ENCODE measurements at regions of chr5 and their contacts with region 1.

Region 1: GRCh38 chr5:57499262-57500050 is 16.8 kb upstream of the ACTBL2 start:
- DNase-seq: no peak
- ATAC-seq: peak; percentile 68 to 71
- H3K4me3 ChIP-seq: peak overlapping the region in 2 of 4 donors; percentile 25 to 49
- H3K27ac ChIP-seq: no peak overlapping the region
- H3K4me1 ChIP-seq: peaks cover 0 to 11% of the 10 kb centered on the region in 2 donors
- H3K27me3 ChIP-seq: no peaks in the 10 kb centered on the region
- CTCF ChIP-seq: peak; percentile 36 to 76 (median 55)
- POLR2A ChIP-seq: no peak

Region 2: GRCh38 chr5:57754616-57755015 is 255.2 kb after region 1 on chr5:
- in situ Hi-C with region 1: loop called in 1 of 4 experiments (anchors 25 kb)
- intact Hi-C with region 1: no loop called
- DNase-seq: no peak
- ATAC-seq: no peak
- H3K4me3 ChIP-seq: no peak overlapping the region
- H3K27ac ChIP-seq: no peak overlapping the region
- H3K4me1 ChIP-seq: no peaks in the 10 kb centered on the region
- H3K27me3 ChIP-seq: no peaks in the 10 kb centered on the region
- CTCF ChIP-seq: no peak
- POLR2A ChIP-seq: no peak

Region 3: GRCh38 chr5:57887851-57888621 is 388.6 kb after region 1 on chr5:
- in situ Hi-C with region 1: no loop called
- intact Hi-C with region 1: loop called (anchors 10 kb)
- DNase-seq: peak in 1 of 2 donors; percentile 13
- ATAC-seq: peak in 1 of 2 donors; percentile 85
- H3K4me3 ChIP-seq: no peak overlapping the region
- H3K27ac ChIP-seq: no peak overlapping the region
- H3K4me1 ChIP-seq: no peaks in the 10 kb centered on the region
- H3K27me3 ChIP-seq: no peaks in the 10 kb centered on the region
- CTCF ChIP-seq: peak; percentile 17 to 56 (median 31)
- POLR2A ChIP-seq: no peak